Aorta (tissue), 5 donors: ENCODE measurements at regions of chr15 and their contacts with region 1.

Region 1: DNA sequence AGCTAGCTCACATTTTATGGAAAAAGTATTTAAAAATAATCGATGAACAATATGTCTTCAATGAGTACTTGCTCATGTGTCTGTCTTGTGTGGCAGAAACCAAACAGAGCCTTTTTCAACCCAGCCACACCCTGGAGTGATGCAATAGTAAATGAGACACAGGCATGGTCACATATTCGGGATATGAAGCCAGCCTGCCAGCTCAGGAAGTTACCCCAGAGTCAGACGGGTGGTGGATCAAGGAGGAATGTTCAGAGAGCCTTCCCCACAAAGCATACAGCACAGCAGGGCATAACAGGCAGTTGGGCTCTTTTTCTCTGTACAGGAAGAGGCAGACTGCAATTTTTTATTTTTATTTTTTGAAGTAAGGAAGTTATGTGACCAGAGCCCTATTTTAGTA is 27.3 kb downstream of the LARP6 start:
- DNase-seq: peak in 1 of 2 donors; percentile 77
- ATAC-seq: peak; percentile 74
- H3K4me3 ChIP-seq: no peak overlapping the region
- H3K27ac ChIP-seq: no peak overlapping the region
- H3K4me1 ChIP-seq: peaks cover 0 to 2% of the 10 kb centered on the region in 2 donors
- H3K27me3 ChIP-seq: no peaks in the 10 kb centered on the region

Region 2: GRCh38 chr15:70584838-70585706 is 241.6 kb before region 1 on chr15:
- intact Hi-C with region 1: no loop called
- DNase-seq: peak in 1 of 2 donors; percentile 72
- ATAC-seq: peak; percentile 22
- H3K4me3 ChIP-seq: no peak overlapping the region
- H3K27ac ChIP-seq: no peak overlapping the region
- H3K4me1 ChIP-seq: no peaks in the 10 kb centered on the region
- H3K27me3 ChIP-seq: no peaks in the 10 kb centered on the region

Region 3: DNA sequence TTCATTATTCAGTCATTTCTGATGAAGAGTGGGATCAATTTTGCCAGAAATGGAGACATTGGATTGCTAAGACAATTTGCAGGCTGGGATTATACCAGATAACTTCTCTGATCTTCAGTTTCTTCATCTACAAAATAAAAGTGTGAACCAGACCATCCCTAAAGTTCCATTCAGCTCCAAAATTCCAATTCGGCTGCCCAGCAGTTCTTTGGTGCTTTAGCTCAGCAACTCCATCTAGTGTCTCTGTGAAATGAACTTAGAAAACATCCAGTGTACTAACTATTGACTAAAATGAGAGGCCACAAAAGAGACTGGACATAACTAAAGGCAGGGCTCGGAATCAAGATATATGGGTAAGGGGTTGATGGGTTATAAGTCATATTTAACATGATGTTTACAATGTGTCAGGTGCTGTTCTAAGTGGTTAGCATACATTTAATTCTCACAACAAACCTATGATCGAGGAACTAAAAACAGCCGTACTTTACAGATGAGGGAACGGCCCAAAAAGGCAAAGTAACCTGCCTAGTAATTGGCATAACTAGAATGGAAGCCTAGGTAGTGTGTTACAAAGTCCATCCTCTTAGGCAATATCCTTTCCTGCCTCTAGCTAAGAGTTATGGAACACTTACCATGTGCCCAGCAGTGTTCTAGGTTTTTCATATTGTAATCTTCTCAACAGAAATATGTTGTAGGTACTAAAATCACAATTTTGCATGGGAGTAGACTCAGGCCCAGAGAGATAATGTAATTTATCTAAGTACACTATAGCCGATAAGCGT is 48.6 kb after region 1 on chr15:
- intact Hi-C with region 1: loop called (anchors 1 kb)
- DNase-seq: no peak
- ATAC-seq: no peak
- H3K4me3 ChIP-seq: no peak overlapping the region
- H3K27ac ChIP-seq: no peak overlapping the region
- H3K4me1 ChIP-seq: no peaks in the 10 kb centered on the region
- H3K27me3 ChIP-seq: peaks cover 0 to 2% of the 10 kb centered on the region in 2 donors